HEK293T (cell line): ENCODE measurements at regions of chr22 and their contacts with region 1.

Region 1: DNA sequence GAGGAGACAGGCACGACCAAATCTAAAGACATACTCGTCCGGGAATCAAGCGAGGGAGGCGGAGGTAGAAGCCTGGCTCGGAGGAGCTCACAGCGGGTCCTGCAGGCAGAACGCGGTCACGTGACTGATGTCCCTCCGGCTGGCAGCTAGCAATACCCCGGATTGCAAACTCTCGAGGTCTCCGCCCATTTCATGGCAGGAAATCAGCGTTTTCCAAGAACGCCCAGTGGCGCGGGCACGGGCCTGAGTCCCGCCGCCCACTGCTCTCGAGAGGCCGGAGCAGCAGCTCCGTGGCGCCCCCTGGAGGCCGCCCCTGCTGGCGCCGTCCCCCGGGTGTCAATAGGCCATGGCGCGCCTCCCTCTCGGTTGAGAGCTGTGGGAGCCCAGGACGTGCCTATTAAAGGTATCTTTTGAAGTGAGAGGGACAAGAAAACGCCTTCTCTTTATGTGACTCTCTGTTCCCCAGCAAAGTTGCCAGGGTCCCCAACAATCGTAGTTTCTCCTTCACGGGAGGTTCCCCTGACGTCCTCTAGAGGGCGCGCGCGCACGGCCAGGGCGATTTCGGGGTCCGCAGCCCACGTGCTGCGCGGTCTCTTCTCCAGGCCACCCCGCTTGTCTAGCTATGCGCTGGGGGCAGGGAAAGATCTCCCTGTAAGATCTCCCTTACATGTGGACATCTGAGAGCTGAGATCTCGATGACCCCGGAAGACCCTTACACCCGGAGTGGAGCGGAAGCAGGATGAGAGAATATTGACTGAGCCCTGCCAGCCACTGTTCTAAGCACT is 37.3 kb upstream of the RBFOX2 start:
- DNase-seq: peak; percentile 97

Region 2: DNA sequence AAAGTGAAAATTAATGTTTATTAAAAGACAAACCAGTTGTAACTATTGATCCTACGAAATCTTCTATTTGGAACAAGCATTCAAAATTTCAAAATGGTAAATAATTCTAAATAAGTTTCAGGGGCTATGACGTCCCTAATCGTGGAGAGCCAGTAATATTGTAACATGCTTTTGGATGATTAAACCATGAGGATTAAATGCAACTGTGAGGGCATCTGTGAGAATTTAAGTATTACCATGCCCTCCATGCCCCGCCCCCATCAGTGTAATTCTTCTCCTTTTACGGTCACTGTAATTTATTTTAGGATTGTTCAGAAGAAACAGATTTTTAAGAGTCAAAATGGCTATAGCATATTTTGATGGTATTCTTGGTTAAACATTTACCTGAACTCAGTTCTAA is 215.1 kb before region 1 on chr22:
- CTCF ChIA-PET with region 1: no interaction called
- POLR2A ChIA-PET with region 1: no interaction called
- DNase-seq: no peak

Region 3: DNA sequence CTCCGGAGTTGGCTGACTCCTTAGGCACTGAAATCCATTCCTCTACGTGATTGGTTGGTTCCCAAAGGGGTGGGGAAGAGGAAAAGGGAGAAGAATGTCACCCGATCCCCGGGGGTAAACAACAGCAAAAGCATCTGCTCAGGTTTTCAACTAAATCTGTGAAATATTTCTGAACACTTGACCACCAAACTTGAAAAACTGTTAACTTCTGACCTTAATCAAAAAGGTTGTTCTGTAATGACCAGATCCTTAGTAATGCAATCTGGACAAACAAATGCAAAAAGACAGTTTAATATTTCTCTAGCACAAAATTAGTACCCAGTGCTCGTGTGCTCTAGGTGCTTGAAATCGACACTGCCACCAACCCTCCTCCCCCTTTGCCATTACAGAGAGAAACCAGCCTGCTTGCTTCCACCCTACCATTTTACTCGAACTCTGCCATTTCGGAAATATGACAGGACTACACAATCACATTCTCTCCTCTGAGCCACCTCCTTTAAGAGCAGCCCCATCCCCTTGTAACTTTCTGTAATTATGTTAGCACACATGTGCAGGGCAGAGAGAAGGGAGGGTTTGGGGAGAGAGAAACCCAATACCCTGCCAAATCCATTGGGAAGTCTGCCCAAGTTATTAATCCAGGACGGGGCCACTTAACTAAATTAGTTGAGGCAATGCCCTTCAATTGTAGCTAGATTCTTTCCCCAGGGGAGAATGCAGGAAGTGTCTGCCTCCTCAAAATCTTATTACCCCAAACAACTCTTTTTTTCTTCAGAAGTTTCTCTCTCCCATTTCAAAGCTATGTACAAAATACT is 151.1 kb before region 1 on chr22:
- CTCF ChIA-PET with region 1: interaction called, 19 read pairs
- POLR2A ChIA-PET with region 1: interaction called, 4 read pairs
- DNase-seq: peak; percentile 83

Region 4: GRCh38 chr22:35930933-35931332 is 135.0 kb before region 1 on chr22:
- CTCF ChIA-PET with region 1: interaction called, 36 read pairs
- POLR2A ChIA-PET with region 1: interaction called, 10 read pairs
- DNase-seq: peak; percentile 55

Region 5: GRCh38 chr22:36017651-36018091 is 48.3 kb before region 1 on chr22:
- CTCF ChIA-PET with region 1: interaction called, 10 read pairs
- POLR2A ChIA-PET with region 1: interaction called, 6 read pairs
- DNase-seq: no peak

Region 6: GRCh38 chr22:36036167-36036624 is 29.8 kb before region 1 on chr22:
- CTCF ChIA-PET with region 1: interaction called, 8 read pairs
- POLR2A ChIA-PET with region 1: interaction called, 54 read pairs
- DNase-seq: no peak

Region 7: GRCh38 chr22:36077271-36077670 is 11.3 kb after region 1 on chr22:
- CTCF ChIA-PET with region 1: interaction called, 15 read pairs
- POLR2A ChIA-PET with region 1: interaction called, 5 read pairs
- DNase-seq: no peak

Region 8: GRCh38 chr22:36097880-36098279 is 31.9 kb after region 1 on chr22:
- CTCF ChIA-PET with region 1: interaction called, 10 read pairs
- POLR2A ChIA-PET with region 1: no interaction called
- DNase-seq: no peak

Region 9: GRCh38 chr22:36156515-36157419 is 90.8 kb after region 1 on chr22:
- CTCF ChIA-PET with region 1: no interaction called
- POLR2A ChIA-PET with region 1: no interaction called
- DNase-seq: no peak

Region 10: GRCh38 chr22:36201630-36202319 is 135.8 kb after region 1 on chr22 and contains the start of gene APOL4:
- CTCF ChIA-PET with region 1: no interaction called
- POLR2A ChIA-PET with region 1: no interaction called
- DNase-seq: no peak

Region 11: GRCh38 chr22:36277482-36278291 is 211.7 kb after region 1 on chr22:
- CTCF ChIA-PET with region 1: no interaction called
- POLR2A ChIA-PET with region 1: no interaction called
- DNase-seq: peak; percentile 80